GM12878 (cell line): ENCODE measurements at regions of chr12 and their contacts with region 1.

Region 1: DNA sequence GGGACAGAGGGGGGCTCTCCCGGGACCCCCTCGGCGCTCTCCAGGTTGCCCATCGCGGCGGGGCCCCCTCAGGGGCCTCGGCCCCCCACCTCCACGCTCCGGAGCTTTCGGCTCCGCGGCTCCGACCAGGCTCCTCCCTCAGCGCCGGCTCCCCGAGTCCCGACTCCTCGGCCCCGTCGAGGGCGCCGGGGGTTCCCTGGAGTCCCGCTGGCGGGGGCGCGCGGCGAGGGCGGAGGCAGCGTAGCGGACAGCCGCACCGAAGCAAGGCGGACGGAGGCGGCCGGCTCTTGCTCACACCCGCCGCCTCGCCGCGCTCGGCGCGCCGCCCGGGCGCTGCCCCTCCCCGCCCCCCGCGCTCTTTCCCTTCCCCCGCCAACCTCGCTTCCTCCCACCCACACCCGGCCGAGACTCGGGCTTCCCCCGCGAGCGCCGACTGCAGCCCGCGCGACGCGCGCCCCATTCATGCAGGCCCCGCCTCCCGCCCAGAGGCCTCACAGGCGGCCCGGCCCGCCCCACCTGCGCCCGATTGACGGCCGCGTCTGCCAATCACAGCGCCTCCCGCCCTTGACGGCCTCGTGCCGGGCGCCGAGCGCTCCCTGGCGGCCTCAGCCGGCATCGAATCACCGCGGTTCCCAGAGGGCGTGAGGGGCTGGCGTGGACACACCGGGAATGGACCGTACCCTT is at the start of gene FMNL3:
- DNase-seq: peak; percentile 82
- ATAC-seq: peak; percentile 82
- H3K4me3 ChIP-seq: peak within 1 kb of the TSS; percentile 96
- H3K27ac ChIP-seq: peak within 1 kb of the TSS; percentile 82
- H3K4me1 ChIP-seq: peaks cover 19% of the 10 kb centered on the region
- H3K27me3 ChIP-seq: peaks cover 0 to 4% of the 10 kb centered on the region in 2 experiments; a peak in 1 of 4 replicates
- CTCF ChIP-seq: peak; percentile 94 to 99 (median 95); a peak in 5 of 6 replicates
- EP300 ChIP-seq: peak in 1 of 2 experiments; percentile 29; a peak in 1 of 4 replicates
- POLR2A ChIP-seq: peak; percentile 77
- RAD21 ChIP-seq: peak; percentile 95
- polyA plus RNA-seq, gene FMNL3: 3.0 to 5.3 TPM

Region 2: GRCh38 chr12:49567611-49568441 is 139.4 kb before region 1 on chr12 and contains the start of gene MCRS1:
- CTCF ChIA-PET with region 1: no interaction called
- POLR2A ChIA-PET with region 1: no interaction called
- RAD21 ChIA-PET with region 1: no interaction called
- SMC1A ChIA-PET with region 1: interaction called, 3 read pairs
- in situ Hi-C with region 1: no loop called
- intact Hi-C with region 1: loop called (anchors 5 kb)
- DNase-seq: peak; percentile 80
- ATAC-seq: peak; percentile 92
- H3K4me3 ChIP-seq: peak within 1 kb of the TSS; percentile 99
- H3K27ac ChIP-seq: peak within 1 kb of the TSS; percentile 91
- H3K4me1 ChIP-seq: peaks cover 8% of the 10 kb centered on the region
- H3K27me3 ChIP-seq: no peaks in the 10 kb centered on the region
- CTCF ChIP-seq: no peak
- EP300 ChIP-seq: no peak
- POLR2A ChIP-seq: peak; percentile 98
- RAD21 ChIP-seq: no peak
- polyA plus RNA-seq, gene MCRS1: 34.3 to 52.4 TPM

Region 3: GRCh38 chr12:49636979-49637755 is 70.1 kb before region 1 on chr12:
- CTCF ChIA-PET with region 1: interaction called, 486 read pairs
- POLR2A ChIA-PET with region 1: interaction called, 40 read pairs
- RAD21 ChIA-PET with region 1: interaction called, 107 read pairs
- SMC1A ChIA-PET with region 1: interaction called, 191 read pairs
- in situ Hi-C with region 1: loop called (anchors 5 kb)
- intact Hi-C with region 1: loop called (anchors 1 kb)
- DNase-seq: no peak
- ATAC-seq: peak; percentile 93
- H3K4me3 ChIP-seq: no peak overlapping the region
- H3K27ac ChIP-seq: no peak overlapping the region
- H3K4me1 ChIP-seq: peaks cover 3% of the 10 kb centered on the region; the same call in 1 of the 2 replicates
- H3K27me3 ChIP-seq: no peaks in the 10 kb centered on the region
- CTCF ChIP-seq: peak; percentile 73 to 77 (median 74)
- EP300 ChIP-seq: no peak
- POLR2A ChIP-seq: no peak; the same call in 1 of the 2 replicates
- RAD21 ChIP-seq: peak; percentile 84

Region 4: DNA sequence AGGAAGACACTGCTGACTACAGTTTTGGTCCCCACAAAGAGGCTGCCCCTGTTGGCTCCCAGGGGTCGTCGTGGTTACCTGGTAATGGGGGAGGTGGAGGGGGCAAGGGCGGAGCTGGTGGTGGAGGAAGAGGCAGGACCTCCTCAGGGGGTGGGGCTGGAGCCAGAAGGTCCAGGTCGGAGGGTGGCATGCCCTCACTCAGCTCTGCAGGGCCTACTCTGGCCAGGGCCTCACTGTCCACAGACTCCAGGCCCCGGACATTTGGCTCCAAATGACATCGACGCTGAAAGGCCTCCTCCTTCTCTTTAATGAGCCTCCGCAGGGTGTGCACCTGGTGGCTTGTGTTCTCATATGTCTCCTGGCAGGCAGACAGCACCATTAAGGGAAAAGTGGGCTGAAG is 55.4 kb before region 1 on chr12:
- CTCF ChIA-PET with region 1: interaction called, 486 read pairs
- POLR2A ChIA-PET with region 1: interaction called, 28 read pairs
- RAD21 ChIA-PET with region 1: interaction called, 10 read pairs
- SMC1A ChIA-PET with region 1: interaction called, 191 read pairs
- in situ Hi-C with region 1: no loop called
- intact Hi-C with region 1: no loop called
- DNase-seq: no peak
- ATAC-seq: no peak
- H3K4me3 ChIP-seq: no peak overlapping the region
- H3K27ac ChIP-seq: no peak overlapping the region
- H3K4me1 ChIP-seq: no peaks in the 10 kb centered on the region
- H3K27me3 ChIP-seq: no peaks in the 10 kb centered on the region
- CTCF ChIP-seq: no peak
- EP300 ChIP-seq: no peak
- POLR2A ChIP-seq: no peak
- RAD21 ChIP-seq: no peak

Region 5: DNA sequence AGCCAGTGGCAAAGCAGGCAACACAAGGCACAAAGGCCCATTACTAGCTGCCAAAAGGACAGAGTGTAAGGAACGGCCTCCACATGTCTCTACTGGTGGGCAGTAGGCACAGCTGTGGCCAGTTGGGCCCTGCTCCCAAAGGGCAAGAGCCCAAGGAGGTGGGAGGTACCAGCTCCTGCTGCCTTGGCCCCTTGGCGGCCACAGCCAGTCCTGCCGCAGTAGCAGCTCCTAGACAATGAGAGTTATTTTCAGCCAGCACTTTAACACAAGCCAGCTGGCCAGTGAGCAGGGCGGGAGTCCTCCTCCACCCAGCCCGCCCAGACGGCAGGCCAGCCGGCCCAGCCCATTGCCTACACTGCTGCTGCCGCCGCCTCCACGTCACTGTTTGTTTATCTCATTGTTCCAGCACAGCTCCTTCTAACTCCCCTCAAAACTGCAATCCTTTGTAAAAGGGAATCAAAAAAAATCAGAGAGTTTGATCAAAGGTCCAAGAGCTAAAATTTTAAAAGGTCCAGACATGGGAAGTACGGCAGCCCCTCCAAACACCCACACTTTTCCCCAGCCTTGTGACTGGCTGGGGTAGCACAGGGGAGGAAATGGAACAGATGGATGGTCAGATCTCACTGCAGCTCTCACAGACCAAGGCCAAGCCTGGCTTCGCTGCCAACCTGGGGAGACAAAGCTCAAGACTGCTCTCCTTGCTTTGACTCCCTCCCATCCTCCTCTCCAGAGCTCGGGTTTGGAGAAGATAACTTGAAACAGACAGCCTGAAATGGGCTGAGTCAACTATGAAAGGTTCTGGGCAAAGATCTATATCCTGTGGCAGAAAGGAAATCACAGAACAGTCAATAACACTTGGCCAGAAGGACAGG is 33.6 kb before region 1 on chr12:
- CTCF ChIA-PET with region 1: interaction called, 86 read pairs
- POLR2A ChIA-PET with region 1: interaction called, 166 read pairs
- RAD21 ChIA-PET with region 1: interaction called, 167 read pairs
- SMC1A ChIA-PET with region 1: interaction called, 129 read pairs
- in situ Hi-C with region 1: no loop called
- intact Hi-C with region 1: no loop called
- DNase-seq: no peak
- ATAC-seq: no peak; the same call in 2 of the 3 replicates
- H3K4me3 ChIP-seq: no peak overlapping the region
- H3K27ac ChIP-seq: peak overlapping the region; percentile 92
- H3K4me1 ChIP-seq: peaks cover 56% of the 10 kb centered on the region
- H3K27me3 ChIP-seq: no peaks in the 10 kb centered on the region
- CTCF ChIP-seq: no peak
- EP300 ChIP-seq: no peak
- POLR2A ChIP-seq: no peak
- RAD21 ChIP-seq: no peak

Region 6: DNA sequence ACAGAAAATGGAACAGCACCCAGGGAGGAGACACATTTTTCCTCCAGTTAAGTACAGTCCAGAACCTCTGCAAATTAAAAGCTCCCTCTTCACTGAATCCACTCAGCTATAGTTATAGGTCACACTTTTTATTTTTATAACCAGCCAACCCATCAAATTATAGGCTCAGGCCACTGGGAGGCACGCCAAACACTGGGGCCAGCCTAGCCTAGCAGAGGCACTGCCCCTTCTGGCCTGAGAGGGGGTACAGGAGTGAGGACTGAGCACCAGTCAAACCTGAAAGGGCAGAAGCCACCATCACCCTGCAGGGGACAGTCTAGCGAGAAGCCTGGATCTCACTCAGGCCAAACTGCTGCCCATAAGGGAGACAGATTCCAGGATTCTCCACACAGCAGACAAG is 19.3 kb before region 1 on chr12:
- CTCF ChIA-PET with region 1: interaction called, 66 read pairs
- POLR2A ChIA-PET with region 1: interaction called, 86 read pairs
- RAD21 ChIA-PET with region 1: interaction called, 73 read pairs
- SMC1A ChIA-PET with region 1: interaction called, 120 read pairs
- in situ Hi-C with region 1: no loop called
- intact Hi-C with region 1: no loop called
- DNase-seq: no peak
- ATAC-seq: peak; percentile 20; the same call in 1 of the 3 replicates
- H3K4me3 ChIP-seq: no peak overlapping the region
- H3K27ac ChIP-seq: no peak overlapping the region
- H3K4me1 ChIP-seq: peaks cover 55% of the 10 kb centered on the region
- H3K27me3 ChIP-seq: no peaks in the 10 kb centered on the region
- CTCF ChIP-seq: no peak
- EP300 ChIP-seq: no peak
- POLR2A ChIP-seq: no peak
- RAD21 ChIP-seq: no peak

Region 7: GRCh38 chr12:49750027-49750995 is 43.0 kb after region 1 on chr12:
- CTCF ChIA-PET with region 1: interaction called, 4 read pairs
- POLR2A ChIA-PET with region 1: interaction called, 10 read pairs
- RAD21 ChIA-PET with region 1: interaction called, 34 read pairs
- SMC1A ChIA-PET with region 1: interaction called, 20 read pairs
- in situ Hi-C with region 1: no loop called
- intact Hi-C with region 1: no loop called
- DNase-seq: peak; percentile 36
- ATAC-seq: peak; percentile 81
- H3K4me3 ChIP-seq: peak overlapping the region; percentile 48
- H3K27ac ChIP-seq: peak overlapping the region; percentile 27
- H3K4me1 ChIP-seq: peaks cover 46% of the 10 kb centered on the region
- H3K27me3 ChIP-seq: no peaks in the 10 kb centered on the region
- CTCF ChIP-seq: peak in 2 of 3 experiments; percentile 6 to 29; a peak in 2 of 6 replicates
- EP300 ChIP-seq: peak in 1 of 2 experiments; percentile 31; a peak in 2 of 4 replicates
- POLR2A ChIP-seq: no peak
- RAD21 ChIP-seq: peak; percentile 30; the same call in 1 of the 2 replicates